Sciatic nerve (tissue), 2 donors: ENCODE measurements at regions of chr5 and their contacts with region 1.

Region 1: GRCh38 chr5:22063717-22064116 is 789.4 kb downstream of the CDH12 start:
- DNase-seq: no peak
- ATAC-seq: no peak

Region 2: GRCh38 chr5:22354963-22355362 is 291.2 kb after region 1 on chr5:
- intact Hi-C with region 1: loop called (anchors 5 kb)
- DNase-seq: no peak
- ATAC-seq: no peak